K562 (cell line): ENCODE measurements at regions of chrX and their contacts with region 1.

Region 1: DNA sequence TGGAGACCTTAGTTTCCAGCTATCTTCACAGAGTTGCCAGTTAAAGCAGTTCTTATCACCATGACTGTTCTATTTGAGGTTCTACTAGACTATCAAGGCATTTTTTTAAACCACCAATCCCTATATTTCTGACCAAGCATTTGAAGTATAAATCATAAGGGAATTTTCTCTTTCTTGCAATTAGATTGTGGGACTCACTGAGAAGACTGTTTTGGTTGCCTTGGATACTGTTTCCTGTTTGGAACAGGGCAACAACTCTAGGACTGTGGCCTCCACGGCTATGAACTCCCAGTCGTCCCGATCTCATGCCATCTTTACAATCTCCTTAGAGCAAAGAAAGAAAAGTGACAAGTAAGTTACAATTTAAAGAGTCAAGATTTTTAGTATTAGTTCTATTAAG is 11.8 kb downstream of the KIF4A start:
- DNase-seq: no peak
- ATAC-seq: no peak
- H3K4me3 ChIP-seq: no peak overlapping the region
- H3K27ac ChIP-seq: no peak overlapping the region
- H3K4me1 ChIP-seq: no peaks in the 10 kb centered on the region
- H3K27me3 ChIP-seq: no peaks in the 10 kb centered on the region
- CTCF ChIP-seq: no peak
- EP300 ChIP-seq: no peak
- POLR2A ChIP-seq: no peak
- RAD21 ChIP-seq: no peak

Region 2: GRCh38 chrX:70289793-70290776 is 11.6 kb before region 1 on chrX and contains the starts of genes KIF4A and PDZD11:
- CTCF ChIA-PET with region 1: no interaction called
- POLR2A ChIA-PET with region 1: interaction called, 13 read pairs
- in situ Hi-C with region 1: no loop called
- intact Hi-C with region 1: no loop called
- DNase-seq: peak; percentile 89 to 95 (median 91)
- ATAC-seq: peak; percentile 100
- H3K4me3 ChIP-seq: peak within 1 kb of the TSS; percentile 78
- H3K27ac ChIP-seq: peak within 1 kb of the TSS; percentile 91
- H3K4me1 ChIP-seq: no peaks in the 10 kb centered on the region; a peak in 1 of 5 replicates
- H3K27me3 ChIP-seq: no peaks in the 10 kb centered on the region
- CTCF ChIP-seq: no peak
- EP300 ChIP-seq: no peak
- POLR2A ChIP-seq: peak; percentile 84
- RAD21 ChIP-seq: no peak
- polyA plus RNA-seq, gene KIF4A: 13.0 to 24.6 TPM
- polyA plus RNA-seq, gene PDZD11: 93.7 to 109 TPM